RWPE1 (cell line): ENCODE measurements at regions of chr4 and their contacts with region 1.

Region 1: DNA sequence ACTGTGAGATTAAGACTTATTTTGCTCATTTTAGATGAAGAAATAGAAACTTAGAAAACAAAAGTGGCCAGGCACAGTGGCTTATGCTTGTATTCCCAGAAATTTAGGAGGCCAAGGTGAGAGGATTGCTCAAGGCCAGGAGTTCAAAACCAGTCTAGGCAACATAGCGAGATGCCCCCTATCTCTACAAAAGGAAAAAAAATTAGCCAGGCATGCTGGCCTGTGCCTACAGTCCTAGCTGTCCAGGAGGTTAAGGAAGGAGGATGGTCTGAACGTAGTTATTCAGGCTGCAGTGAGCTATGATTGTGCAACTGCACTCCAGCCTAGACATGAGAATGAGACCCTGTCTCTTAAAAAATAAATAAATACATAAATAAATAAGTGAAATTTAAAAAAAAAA is 28.0 kb downstream of the APELA start:
- DNase-seq: no peak
- H3K27ac ChIP-seq: no peak overlapping the region
- CTCF ChIP-seq: no peak

Region 2: GRCh38 chr4:163554870-163555465 is 1350.0 kb before region 1 on chr4:
- CTCF ChIA-PET with region 1: interaction called, 10 read pairs
- POLR2A ChIA-PET with region 1: no interaction called
- DNase-seq: peak; percentile 30
- H3K27ac ChIP-seq: no peak overlapping the region
- CTCF ChIP-seq: peak; percentile 81